Kidney (tissue), 22 donors: ENCODE measurements at regions of chr1 and their contacts with region 1.

Region 1: GRCh38 chr1:100459358-100460114 is 78.4 kb upstream of the GPR88 start:
- DNase-seq: peak in 4 of 5 donors; percentile 78 to 93 (median 83)
- H3K4me3 ChIP-seq: no peak overlapping the region
- H3K27ac ChIP-seq: no peak overlapping the region
- H3K4me1 ChIP-seq: no peaks in the 10 kb centered on the region
- H3K27me3 ChIP-seq: no peaks in the 10 kb centered on the region
- CTCF ChIP-seq: peak; percentile 93

Region 2: GRCh38 chr1:100556925-100557605 is 97.5 kb after region 1 on chr1:
- intact Hi-C with region 1: no loop called
- DNase-seq: no peak
- H3K4me3 ChIP-seq: no peak overlapping the region
- H3K27ac ChIP-seq: no peak overlapping the region
- H3K4me1 ChIP-seq: no peaks in the 10 kb centered on the region
- H3K27me3 ChIP-seq: no peaks in the 10 kb centered on the region
- CTCF ChIP-seq: no peak

Region 3: DNA sequence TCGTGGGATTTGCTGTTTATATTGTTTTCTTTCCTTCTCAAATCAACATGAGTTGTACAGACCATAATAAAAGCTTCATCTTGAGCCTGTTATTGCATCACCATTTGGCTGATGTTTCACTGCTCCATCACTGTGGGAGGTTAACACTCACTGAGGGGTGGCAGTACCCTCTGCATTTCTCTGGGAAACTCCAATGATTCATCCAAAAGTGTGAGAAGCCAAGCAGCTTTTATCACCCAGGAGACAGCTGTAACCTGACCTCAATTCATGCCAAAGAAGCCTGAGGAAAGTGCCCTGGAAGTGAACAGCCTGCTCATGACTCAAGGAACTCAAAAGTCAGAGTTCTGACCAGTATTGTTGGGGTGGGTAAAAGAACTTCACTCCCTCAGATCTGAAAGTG is 162.5 kb after region 1 on chr1:
- intact Hi-C with region 1: no loop called
- DNase-seq: peak in 3 of 5 donors; percentile 56 to 85 (median 83)
- H3K4me3 ChIP-seq: no peak overlapping the region
- H3K27ac ChIP-seq: peak overlapping the region; percentile 12 to 84
- H3K4me1 ChIP-seq: peaks cover 3 to 36% (median 17%) of the 10 kb centered on the region in 3 donors
- H3K27me3 ChIP-seq: no peaks in the 10 kb centered on the region
- CTCF ChIP-seq: no peak

Region 4: DNA sequence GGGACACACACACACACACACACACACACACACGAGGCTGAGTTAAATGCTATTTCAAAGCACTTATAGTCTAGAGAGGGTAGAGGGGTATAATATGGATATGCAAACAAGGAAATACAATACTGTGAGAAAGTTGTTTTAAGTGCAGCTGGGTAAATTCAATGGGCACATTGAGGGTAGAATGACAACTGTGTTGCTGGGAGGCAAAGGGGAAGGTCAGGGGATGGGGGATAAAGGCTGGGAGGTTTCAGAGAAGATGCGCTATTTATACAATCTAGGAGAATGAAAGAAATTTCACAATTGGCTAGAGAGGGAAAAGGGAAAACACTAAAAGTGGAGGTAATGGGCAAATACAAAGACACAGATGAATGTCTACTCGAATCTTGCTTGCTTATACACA is 415.7 kb after region 1 on chr1:
- intact Hi-C with region 1: loop called (anchors 5 kb)
- DNase-seq: no peak
- H3K4me3 ChIP-seq: no peak overlapping the region
- H3K27ac ChIP-seq: no peak overlapping the region
- H3K4me1 ChIP-seq: no peaks in the 10 kb centered on the region
- H3K27me3 ChIP-seq: no peaks in the 10 kb centered on the region
- CTCF ChIP-seq: no peak